ENCODE measurements at regions of chr17 and their contacts with region 1.

Region 1: DNA sequence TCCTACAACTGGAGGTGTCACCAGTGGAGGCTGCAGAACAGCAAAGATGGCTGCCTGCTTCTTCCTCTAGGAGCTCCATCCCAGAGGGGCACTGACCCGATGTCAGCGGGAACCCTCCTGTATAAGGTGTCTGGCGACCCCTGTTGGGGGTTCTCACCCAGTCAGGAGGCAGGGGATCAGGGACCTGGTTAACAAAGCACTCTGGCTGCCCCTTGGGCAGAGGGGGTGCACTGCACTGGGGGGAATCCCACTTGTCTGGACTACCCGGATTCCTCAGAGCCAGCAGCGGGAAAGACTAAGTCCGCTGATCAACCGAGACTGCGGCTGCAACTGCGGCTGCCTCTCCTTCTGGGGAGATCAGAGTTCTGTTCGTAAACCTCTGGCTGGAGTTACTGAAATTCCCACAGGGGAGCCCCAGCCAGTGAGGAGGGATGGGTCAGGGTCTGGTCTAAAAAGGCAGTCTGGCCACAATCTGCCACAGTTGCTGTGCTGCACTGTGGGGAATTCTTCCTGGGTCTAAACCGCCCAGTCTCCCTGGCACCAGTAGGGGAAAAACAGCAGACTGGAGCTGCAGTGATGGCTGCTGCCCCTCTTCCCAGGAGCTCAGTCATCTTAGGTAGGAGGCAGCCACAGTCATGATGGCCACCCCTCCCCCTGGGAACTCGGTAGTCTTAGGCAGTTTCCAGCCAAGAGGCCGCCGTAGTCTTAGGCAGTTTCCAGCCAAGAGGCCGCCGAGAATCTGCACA is 213.4 kb downstream of the CYB561 start:
- DNase-seq: no peak
- ATAC-seq: no peak
- H3K4me3 ChIP-seq: no peak overlapping the region
- H3K27ac ChIP-seq: no peak overlapping the region
- H3K4me1 ChIP-seq: no peaks in the 10 kb centered on the region
- H3K27me3 ChIP-seq: no peaks in the 10 kb centered on the region
- CTCF ChIP-seq: no peak
- POLR2A ChIP-seq: no peak

Region 2: DNA sequence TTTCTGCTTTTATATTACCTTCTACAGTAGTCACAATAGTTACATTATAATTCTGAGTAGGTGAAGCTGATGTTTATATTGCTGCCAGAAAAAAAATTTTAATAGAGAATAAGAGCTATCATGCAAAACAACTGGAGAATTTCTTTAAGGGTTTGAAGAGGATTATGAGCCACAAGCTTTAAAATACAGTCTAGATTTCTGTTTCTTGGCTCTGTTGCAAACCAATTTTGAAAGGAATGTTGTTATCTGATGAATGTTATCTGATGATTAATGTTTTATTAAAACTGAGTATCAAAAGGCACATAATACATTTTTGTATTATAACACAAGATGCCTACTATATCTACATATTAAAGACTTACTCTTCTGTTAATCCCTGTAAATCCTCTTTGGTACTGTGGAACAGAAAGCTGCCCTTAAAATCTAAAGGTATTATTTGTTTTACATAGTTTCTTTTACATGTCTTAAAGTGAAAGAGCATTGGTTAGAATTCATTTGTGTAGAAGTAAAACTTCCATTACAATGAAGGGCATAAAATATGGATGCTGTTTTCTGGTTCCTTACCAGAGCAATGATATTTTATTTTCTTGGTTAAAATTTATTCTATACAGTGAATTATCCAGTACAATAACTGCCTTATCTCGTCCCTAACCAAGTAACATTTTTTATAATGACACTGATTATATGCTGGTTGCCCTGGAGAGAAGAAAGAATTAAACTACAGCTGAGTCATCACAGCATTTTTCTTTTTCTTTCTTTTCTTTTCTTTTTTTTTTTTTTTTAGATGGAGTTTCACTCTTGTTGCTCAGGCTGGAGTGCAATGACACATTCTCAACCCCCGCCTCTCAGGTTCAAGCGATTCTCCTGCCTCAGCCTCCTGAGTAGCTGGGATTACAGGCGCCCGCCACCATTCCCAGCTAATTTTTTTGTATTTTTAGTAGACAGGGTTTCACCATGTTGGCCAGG is 61.0 kb before region 1 on chr17:
- intact Hi-C with region 1: loop called in 1 of 10 experiments (anchors 10 kb)
- DNase-seq: no peak
- ATAC-seq: no peak
- H3K4me3 ChIP-seq: no peak overlapping the region
- H3K27ac ChIP-seq: no peak overlapping the region
- H3K4me1 ChIP-seq: no peaks in the 10 kb centered on the region
- H3K27me3 ChIP-seq: no peaks in the 10 kb centered on the region
- CTCF ChIP-seq: no peak
- POLR2A ChIP-seq: no peak

Region 3: GRCh38 chr17:63275318-63275970 is 42.7 kb after region 1 on chr17:
- intact Hi-C with region 1: no loop called
- DNase-seq: no peak
- ATAC-seq: peak in 3 of 4 donors; percentile 73 to 91 (median 78)
- H3K4me3 ChIP-seq: no peak overlapping the region
- H3K27ac ChIP-seq: peak overlapping the region in 6 of 12 donors; percentile 8 to 51 (median 42)
- H3K4me1 ChIP-seq: peaks cover 0 to 53% (median 5%) of the 10 kb centered on the region in 12 donors
- H3K27me3 ChIP-seq: no peaks in the 10 kb centered on the region
- CTCF ChIP-seq: no peak
- POLR2A ChIP-seq: no peak

Measured in heart left ventricle (tissue), 16 donors.